Heart right ventricle (tissue), 16 donors: ENCODE measurements at regions of chr3 and their contacts with region 1.

Region 1: GRCh38 chr3:128322066-128323022 is 144.3 kb downstream of the DNAJB8 start:
- DNase-seq: peak; percentile 42
- ATAC-seq: peak in 6 of 8 donors; percentile 19 to 64 (median 58)
- H3K4me3 ChIP-seq: no peak overlapping the region
- H3K27ac ChIP-seq: no peak overlapping the region
- H3K4me1 ChIP-seq: peaks cover 0 to 8% (median 0%) of the 10 kb centered on the region in 9 donors
- H3K27me3 ChIP-seq: no peaks in the 10 kb centered on the region
- CTCF ChIP-seq: peak in 8 of 9 donors; percentile 40 to 72 (median 64)

Region 2: DNA sequence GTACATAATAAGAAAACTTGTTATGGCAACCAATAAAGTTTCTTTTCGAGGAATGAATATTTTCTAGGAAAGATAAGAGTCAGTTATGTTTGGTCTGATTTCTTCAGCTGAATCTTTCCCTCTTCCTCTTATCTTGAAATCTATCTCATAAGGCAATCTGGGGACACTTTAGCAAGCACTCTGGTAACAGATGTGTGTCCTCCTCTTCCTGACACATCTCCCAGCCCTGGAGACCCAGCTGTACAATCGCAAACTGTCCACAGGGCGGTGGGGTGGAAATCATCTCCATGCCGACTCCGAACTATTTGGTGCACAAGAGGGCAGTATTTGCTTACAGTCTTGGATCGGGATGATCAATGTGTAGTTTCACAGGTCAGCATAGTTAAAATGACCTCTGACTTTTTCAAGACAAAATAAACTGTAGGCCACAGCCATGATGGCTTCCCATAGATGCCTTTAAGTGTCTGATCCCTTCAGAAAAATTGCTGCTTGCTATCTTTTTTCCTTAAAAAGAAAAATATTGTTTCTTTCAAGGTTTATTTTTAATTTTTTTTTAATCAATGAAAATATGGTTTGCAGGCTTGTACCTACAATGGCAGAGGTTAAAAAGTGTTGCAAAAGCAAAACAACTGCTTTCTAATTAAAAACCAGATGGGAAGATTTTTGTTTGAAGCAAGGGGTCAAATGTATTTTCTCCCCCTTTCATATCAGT is 151.4 kb before region 1 on chr3:
- intact Hi-C with region 1: loop called in 7 of 10 experiments (anchors 2 to 10 kb)
- DNase-seq: peak; percentile 23 to 70
- ATAC-seq: peak in 7 of 8 donors; percentile 66 to 76 (median 72)
- H3K4me3 ChIP-seq: no peak overlapping the region
- H3K27ac ChIP-seq: no peak overlapping the region
- H3K4me1 ChIP-seq: peaks cover 11 to 80% (median 54%) of the 10 kb centered on the region in 9 donors
- H3K27me3 ChIP-seq: no peaks in the 10 kb centered on the region
- CTCF ChIP-seq: peak; percentile 30 to 87 (median 71)

Region 3: GRCh38 chr3:128226795-128227395 is 95.4 kb before region 1 on chr3:
- intact Hi-C with region 1: loop called in 3 of 10 experiments (anchors 5 kb)
- DNase-seq: peak in 1 of 2 donors; percentile 49
- ATAC-seq: peak in 6 of 8 donors; percentile 60 to 71 (median 66)
- H3K4me3 ChIP-seq: no peak overlapping the region
- H3K27ac ChIP-seq: no peak overlapping the region
- H3K4me1 ChIP-seq: peaks cover 0 to 34% (median 10%) of the 10 kb centered on the region in 9 donors
- H3K27me3 ChIP-seq: no peaks in the 10 kb centered on the region
- CTCF ChIP-seq: peak; percentile 36 to 77 (median 60)

Region 4: GRCh38 chr3:128232376-128233178 is 89.8 kb before region 1 on chr3:
- intact Hi-C with region 1: loop called in 3 of 10 experiments (anchors 5 kb)
- DNase-seq: no peak
- ATAC-seq: no peak
- H3K4me3 ChIP-seq: no peak overlapping the region
- H3K27ac ChIP-seq: no peak overlapping the region
- H3K4me1 ChIP-seq: peaks cover 0 to 70% (median 27%) of the 10 kb centered on the region in 9 donors
- H3K27me3 ChIP-seq: no peaks in the 10 kb centered on the region
- CTCF ChIP-seq: no peak

Region 5: GRCh38 chr3:128369864-128370642 is 47.7 kb after region 1 on chr3:
- intact Hi-C with region 1: no loop called
- DNase-seq: no peak
- ATAC-seq: peak in 5 of 8 donors; percentile 15 to 44 (median 15)
- H3K4me3 ChIP-seq: no peak overlapping the region
- H3K27ac ChIP-seq: peak overlapping the region; percentile 53 to 86 (median 74)
- H3K4me1 ChIP-seq: peaks cover 16 to 57% (median 53%) of the 10 kb centered on the region in 9 donors
- H3K27me3 ChIP-seq: no peaks in the 10 kb centered on the region
- CTCF ChIP-seq: no peak